Transverse colon (tissue), 4 donors: ENCODE measurements at regions of chr4 and their contacts with region 1.

Region 1: DNA sequence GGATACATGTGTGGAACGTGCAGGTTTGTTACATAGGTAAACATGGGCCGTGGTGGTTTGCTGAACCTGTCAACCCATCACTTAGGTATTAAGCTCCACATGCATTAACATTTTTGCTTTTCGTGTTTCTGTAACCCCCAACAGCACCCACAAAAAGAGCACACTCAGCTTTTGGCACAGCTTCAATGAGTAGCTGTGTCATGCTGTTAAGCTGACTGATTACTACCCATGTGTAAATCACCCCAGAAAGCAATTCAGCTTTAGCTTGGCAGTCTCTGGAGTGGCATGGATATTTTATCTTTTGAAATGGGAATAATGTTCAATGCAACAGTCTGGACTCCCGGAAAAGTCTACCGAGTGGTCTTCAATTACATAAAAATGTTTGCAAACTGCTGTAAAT is 734.3 kb downstream of the STIM2 start:
- DNase-seq: no peak
- H3K4me3 ChIP-seq: no peak overlapping the region
- H3K27ac ChIP-seq: no peak overlapping the region
- H3K4me1 ChIP-seq: no peaks in the 10 kb centered on the region
- H3K27me3 ChIP-seq: no peaks in the 10 kb centered on the region
- CTCF ChIP-seq: no peak
- EP300 ChIP-seq: no peak
- POLR2A ChIP-seq: no peak

Region 2: DNA sequence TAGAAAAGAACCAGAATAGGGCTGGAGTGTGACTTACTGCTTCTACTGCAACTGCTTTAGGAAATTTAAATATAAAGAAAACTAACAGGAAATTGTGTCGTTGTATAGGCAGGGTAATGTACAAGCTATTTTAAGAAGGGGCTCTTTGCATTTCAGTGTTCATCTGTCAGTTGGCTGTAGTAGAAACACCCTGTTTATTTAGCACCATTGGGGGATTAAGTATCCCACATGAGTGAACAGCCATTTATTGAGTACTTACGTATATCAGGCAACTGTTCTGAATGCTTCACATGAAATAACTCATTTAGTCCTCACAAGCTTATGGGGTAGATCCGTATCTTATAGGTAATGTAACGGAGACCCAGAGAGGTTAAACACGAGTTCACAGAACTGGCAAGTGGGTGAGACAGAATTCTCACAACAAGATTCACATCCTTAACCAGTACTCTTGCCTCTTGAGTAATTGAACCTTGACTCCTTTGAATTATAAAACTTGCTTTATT is 710.4 kb before region 1 on chr4:
- in situ Hi-C with region 1: no loop called
- intact Hi-C with region 1: no loop called
- DNase-seq: no peak
- H3K4me3 ChIP-seq: no peak overlapping the region
- H3K27ac ChIP-seq: peak overlapping the region; percentile 3 to 63 (median 34)
- H3K4me1 ChIP-seq: peaks cover 0 to 33% (median 7%) of the 10 kb centered on the region in 4 donors
- H3K27me3 ChIP-seq: no peaks in the 10 kb centered on the region
- CTCF ChIP-seq: no peak
- EP300 ChIP-seq: no peak
- POLR2A ChIP-seq: peak; percentile 18

Region 3: GRCh38 chr4:27251771-27252170 is 343.2 kb before region 1 on chr4:
- in situ Hi-C with region 1: no loop called
- intact Hi-C with region 1: loop called (anchors 5 kb)
- DNase-seq: no peak
- H3K4me3 ChIP-seq: no peak overlapping the region
- H3K27ac ChIP-seq: no peak overlapping the region
- H3K4me1 ChIP-seq: no peaks in the 10 kb centered on the region
- H3K27me3 ChIP-seq: no peaks in the 10 kb centered on the region
- CTCF ChIP-seq: no peak
- EP300 ChIP-seq: no peak
- POLR2A ChIP-seq: no peak